PC-9 (cell line): ENCODE measurements at regions of chr7 and their contacts with region 1.

Region 1: DNA sequence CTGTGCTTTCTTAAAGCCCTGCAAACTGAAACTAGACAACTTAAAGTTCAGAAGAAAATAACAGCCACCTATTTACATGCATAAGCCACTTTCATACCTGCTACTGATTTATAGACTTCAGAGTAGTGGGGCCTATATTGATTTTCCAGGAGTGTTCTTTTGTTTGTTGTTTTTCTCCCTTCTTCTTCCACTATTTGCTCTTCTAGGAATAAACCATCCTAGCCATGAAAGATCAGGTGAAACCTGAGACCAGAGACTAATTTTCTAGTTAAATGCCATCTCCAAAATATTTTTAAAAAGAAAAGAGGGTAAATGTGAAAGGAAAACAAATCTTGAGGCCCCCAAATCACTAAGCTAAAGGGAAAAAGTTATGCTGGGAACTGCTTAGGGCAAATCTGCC is 72.4 kb upstream of the C1GALT1 start:
- DNase-seq: no peak
- H3K4me3 ChIP-seq: no peak overlapping the region
- H3K27ac ChIP-seq: no peak overlapping the region
- H3K4me1 ChIP-seq: no peaks in the 10 kb centered on the region
- H3K27me3 ChIP-seq: no peaks in the 10 kb centered on the region
- CTCF ChIP-seq: no peak

Region 2: GRCh38 chr7:7157177-7157886 is 47.4 kb after region 1 on chr7:
- CTCF ChIA-PET with region 1: interaction called, 7 read pairs
- POLR2A ChIA-PET with region 1: no interaction called
- intact Hi-C with region 1: loop called (anchors 5 kb)
- DNase-seq: peak in 1 of 2 experiments; percentile 16
- H3K4me3 ChIP-seq: no peak overlapping the region
- H3K27ac ChIP-seq: no peak overlapping the region
- H3K4me1 ChIP-seq: no peaks in the 10 kb centered on the region
- H3K27me3 ChIP-seq: no peaks in the 10 kb centered on the region
- CTCF ChIP-seq: no peak